Gastrocnemius medialis (tissue), 4 donors: ENCODE measurements at regions of chr19 and their contacts with region 1.

Region 1: DNA sequence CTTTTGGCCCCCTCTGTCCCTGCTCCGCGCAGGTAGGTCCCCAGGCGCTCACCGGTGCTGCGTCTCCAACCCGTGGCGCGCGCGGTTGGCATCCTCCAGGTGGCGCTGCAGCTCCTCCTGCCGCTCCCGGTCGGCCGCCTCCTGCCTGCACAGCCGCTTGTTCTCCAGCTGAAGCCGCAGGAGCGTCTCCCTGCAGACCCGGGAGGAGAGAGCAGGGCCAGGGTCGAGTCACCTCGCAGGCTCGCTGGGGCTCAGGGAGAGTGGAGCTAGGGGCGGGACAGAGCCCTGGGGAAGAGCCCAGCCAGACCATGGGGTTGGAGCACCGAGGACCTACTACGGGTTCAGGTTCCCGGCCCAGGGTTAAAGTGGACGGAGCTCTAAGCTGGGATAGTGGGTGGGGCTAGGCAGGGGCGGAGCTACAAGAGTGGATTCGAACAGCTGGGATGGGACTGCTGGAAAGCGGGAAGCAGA is 9.3 kb downstream of the HOOK2 start:
- DNase-seq: peak; percentile 50 to 62
- ATAC-seq: peak; percentile 85 to 88
- H3K4me3 ChIP-seq: peak overlapping the region; percentile 46 to 59 (median 56)
- H3K27ac ChIP-seq: peak overlapping the region; percentile 60 to 76 (median 67)
- H3K4me1 ChIP-seq: peaks cover 1 to 8% of the 10 kb centered on the region in 2 donors
- H3K27me3 ChIP-seq: no peaks in the 10 kb centered on the region
- CTCF ChIP-seq: peak; percentile 71 to 99 (median 95)
- POLR2A ChIP-seq: peak; percentile 20 to 56

Region 2: GRCh38 chr19:12255372-12255771 is 510.7 kb before region 1 on chr19:
- in situ Hi-C with region 1: no loop called
- intact Hi-C with region 1: no loop called
- DNase-seq: no peak
- ATAC-seq: no peak
- H3K4me3 ChIP-seq: no peak overlapping the region
- H3K27ac ChIP-seq: no peak overlapping the region
- H3K4me1 ChIP-seq: no peaks in the 10 kb centered on the region
- H3K27me3 ChIP-seq: no peaks in the 10 kb centered on the region
- CTCF ChIP-seq: no peak
- POLR2A ChIP-seq: no peak

Region 3: GRCh38 chr19:12777217-12778016 is 11.3 kb after region 1 on chr19:
- in situ Hi-C with region 1: no loop called
- intact Hi-C with region 1: loop called (anchors 1 kb)
- DNase-seq: peak in 1 of 2 donors; percentile 66
- ATAC-seq: peak; percentile 28 to 38
- H3K4me3 ChIP-seq: peak overlapping the region; percentile 58 to 76 (median 70)
- H3K27ac ChIP-seq: peak overlapping the region; percentile 87 to 94 (median 92)
- H3K4me1 ChIP-seq: peaks cover 44 to 57% of the 10 kb centered on the region in 2 donors
- H3K27me3 ChIP-seq: no peaks in the 10 kb centered on the region
- CTCF ChIP-seq: peak; percentile 93 to 98 (median 96)
- POLR2A ChIP-seq: no peak

Region 4: DNA sequence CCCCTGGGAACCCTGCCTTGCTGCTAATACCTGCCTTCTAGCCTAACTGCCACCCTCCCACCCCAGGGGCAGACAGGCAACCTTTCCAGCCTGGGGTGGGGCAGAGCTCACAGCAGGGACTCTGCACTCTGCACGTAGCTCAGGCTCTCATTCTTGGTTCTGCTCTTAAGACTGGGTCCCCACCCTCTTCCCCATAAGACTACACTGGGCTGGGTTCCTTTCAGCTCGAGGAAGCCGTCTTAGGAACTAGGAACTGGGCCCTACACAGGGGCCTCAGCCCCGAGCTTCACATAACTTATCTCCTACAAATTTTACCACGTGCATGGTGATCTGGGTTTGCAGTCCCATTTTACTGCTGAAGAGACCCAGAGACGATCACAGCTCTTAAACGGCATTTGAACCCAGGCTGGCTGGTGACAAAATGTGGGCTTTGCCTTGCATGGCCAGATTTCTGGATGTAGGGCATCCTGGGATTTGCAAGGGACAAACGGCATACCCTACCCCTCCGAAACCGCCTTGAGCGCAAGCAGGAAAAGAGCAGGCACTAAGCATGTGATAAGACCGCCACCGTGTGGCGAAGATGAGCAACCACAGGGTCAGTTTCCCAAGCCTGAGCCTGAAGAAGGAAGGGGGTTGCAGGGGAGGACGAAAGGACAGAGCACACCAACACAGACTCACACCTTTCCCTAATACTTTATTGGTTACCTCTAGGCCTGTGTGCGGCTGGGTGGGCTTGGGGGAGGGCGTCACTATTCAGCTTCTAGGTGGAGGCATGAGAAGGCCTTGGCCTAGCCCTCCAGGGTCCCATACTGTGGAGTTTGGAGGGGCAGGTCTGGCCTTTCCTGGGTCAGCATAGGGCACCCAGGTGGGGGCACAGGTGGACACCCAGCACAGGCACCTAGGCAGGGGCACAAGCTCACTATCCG is 30.3 kb after region 1 on chr19:
- in situ Hi-C with region 1: loop called in 2 of 4 experiments (anchors 5 kb)
- intact Hi-C with region 1: loop called (anchors 1 kb)
- DNase-seq: peak in 1 of 2 donors; percentile 66
- ATAC-seq: peak in 1 of 2 donors; percentile 9
- H3K4me3 ChIP-seq: no peak overlapping the region
- H3K27ac ChIP-seq: peak overlapping the region; percentile 20 to 47 (median 38)
- H3K4me1 ChIP-seq: peaks cover 16 to 24% of the 10 kb centered on the region in 2 donors
- H3K27me3 ChIP-seq: no peaks in the 10 kb centered on the region
- CTCF ChIP-seq: peak; percentile 93 to 98 (median 97)
- POLR2A ChIP-seq: no peak

Region 5: GRCh38 chr19:12847159-12848139 is 81.4 kb after region 1 on chr19:
- in situ Hi-C with region 1: loop called in 3 of 4 experiments (anchors 5 to 10 kb)
- intact Hi-C with region 1: loop called (anchors 1 kb)
- DNase-seq: peak; percentile 57 to 78
- ATAC-seq: peak; percentile 90 to 93
- H3K4me3 ChIP-seq: peak overlapping the region in 3 of 4 donors; percentile 23 to 39 (median 24)
- H3K27ac ChIP-seq: peak overlapping the region in 1 of 4 donors; percentile 28
- H3K4me1 ChIP-seq: peaks cover 5 to 6% of the 10 kb centered on the region in 2 donors
- H3K27me3 ChIP-seq: peaks cover 19 to 22% (median 19%) of the 10 kb centered on the region in 3 donors
- CTCF ChIP-seq: peak; percentile 95 to 99 (median 98)
- POLR2A ChIP-seq: no peak